ENCODE measurements at regions of chr9 and their contacts with region 1.

Region 1: GRCh38 chr9:128067876-128068613 is at the start of gene SLC25A25:
- DNase-seq: peak; percentile 100
- ATAC-seq: peak; percentile 94 to 97 (median 96)
- H3K4me3 ChIP-seq: peak within 1 kb of the TSS; percentile 66 to 96 (median 80)
- H3K27ac ChIP-seq: peak within 1 kb of the TSS; percentile 91 to 99 (median 98)
- H3K4me1 ChIP-seq: peaks cover 6 to 70% (median 42%) of the 10 kb centered on the region in 12 donors
- H3K27me3 ChIP-seq: no peaks in the 10 kb centered on the region
- CTCF ChIP-seq: no peak
- POLR2A ChIP-seq: peak in 1 of 2 donors; percentile 84
- total RNA-seq, gene SLC25A25: 3.2 to 15.1 (median 6.7) TPM

Region 2: DNA sequence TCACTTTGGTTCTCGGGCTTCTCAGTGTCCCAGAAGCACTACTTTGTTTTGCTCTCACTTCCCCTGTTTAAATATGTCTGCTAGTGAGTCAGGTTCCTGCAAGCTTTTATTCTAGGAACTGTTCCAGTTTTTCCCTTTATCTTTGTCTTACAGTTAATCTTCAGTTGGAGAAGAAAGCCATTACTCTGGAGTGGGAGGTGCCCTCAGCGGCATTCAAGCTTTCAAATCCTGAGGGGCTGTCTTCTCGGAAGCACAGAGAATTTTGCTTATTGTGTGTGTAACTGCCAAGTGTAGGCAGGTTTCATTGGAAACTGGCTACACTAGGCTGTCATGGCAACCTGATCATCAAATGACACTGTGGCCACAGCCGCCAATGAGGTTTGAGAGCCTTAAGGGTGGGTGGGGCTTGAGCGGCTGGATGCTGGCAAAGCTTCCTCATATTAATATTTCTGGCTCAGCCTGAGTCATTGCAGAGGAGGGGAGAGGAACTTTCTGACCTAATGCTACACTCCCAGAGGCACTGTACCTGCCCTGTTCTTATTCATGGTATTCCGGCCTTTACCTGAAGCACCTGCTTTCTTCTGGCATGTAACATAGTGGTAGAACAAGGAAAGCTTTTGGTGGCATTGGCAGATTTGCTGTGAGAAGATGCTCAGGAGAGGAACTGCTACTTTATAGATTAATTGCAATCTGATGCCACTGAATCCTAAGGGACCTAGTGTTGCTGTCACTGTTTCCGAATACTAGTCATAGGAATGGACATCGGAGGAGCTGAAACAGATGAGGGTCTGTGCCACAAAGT is 26.3 kb after region 1 on chr9:
- intact Hi-C with region 1: loop called in 1 of 10 experiments (anchors 2 kb)
- DNase-seq: peak; percentile 90 to 95 (median 94)
- ATAC-seq: peak; percentile 81 to 86 (median 84)
- H3K4me3 ChIP-seq: peak overlapping the region in 10 of 12 donors; percentile 4 to 41 (median 27)
- H3K27ac ChIP-seq: peak overlapping the region; percentile 48 to 96 (median 80)
- H3K4me1 ChIP-seq: peaks cover 15 to 89% (median 54%) of the 10 kb centered on the region in 12 donors
- H3K27me3 ChIP-seq: no peaks in the 10 kb centered on the region
- CTCF ChIP-seq: no peak
- POLR2A ChIP-seq: peak; percentile 87 to 92

Measured in heart left ventricle (tissue), 16 donors.